HEK293 (cell line): ENCODE measurements at regions of chr2 and their contacts with region 1.

Region 1: GRCh38 chr2:149561309-149561926 is 26.2 kb downstream of the MMADHC start:
- H3K4me3 ChIP-seq: no peak overlapping the region
- H3K27ac ChIP-seq: no peak overlapping the region
- H3K4me1 ChIP-seq: peaks cover 7% of the 10 kb centered on the region; the same call in 1 of the 2 replicates
- CTCF ChIP-seq: peak; percentile 71; the same call in 1 of the 2 replicates

Region 2: DNA sequence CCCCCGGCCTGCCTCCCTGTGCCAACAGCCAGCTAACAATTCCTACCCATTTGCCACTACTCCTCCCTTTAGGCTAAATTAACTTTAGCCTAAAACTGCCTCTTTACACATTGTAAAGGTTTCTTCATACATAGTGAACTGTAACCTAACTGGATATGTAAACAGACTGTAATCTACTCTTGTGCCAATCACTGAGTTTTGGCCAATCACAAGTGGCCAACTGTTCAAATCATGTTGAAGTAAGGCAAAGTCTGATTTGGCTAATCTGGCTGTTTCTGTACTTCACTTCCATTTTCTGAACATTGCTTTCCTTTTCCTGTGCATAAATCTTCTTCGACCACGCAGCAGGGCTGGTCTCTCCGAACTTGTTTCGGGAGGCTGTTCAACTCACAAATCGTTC is 334.6 kb before region 1 on chr2:
- CTCF ChIA-PET with region 1: no interaction called
- POLR2A ChIA-PET with region 1: no interaction called
- H3K4me3 ChIP-seq: no peak overlapping the region
- H3K27ac ChIP-seq: no peak overlapping the region
- H3K4me1 ChIP-seq: peaks cover 10% of the 10 kb centered on the region
- CTCF ChIP-seq: no peak

Region 3: DNA sequence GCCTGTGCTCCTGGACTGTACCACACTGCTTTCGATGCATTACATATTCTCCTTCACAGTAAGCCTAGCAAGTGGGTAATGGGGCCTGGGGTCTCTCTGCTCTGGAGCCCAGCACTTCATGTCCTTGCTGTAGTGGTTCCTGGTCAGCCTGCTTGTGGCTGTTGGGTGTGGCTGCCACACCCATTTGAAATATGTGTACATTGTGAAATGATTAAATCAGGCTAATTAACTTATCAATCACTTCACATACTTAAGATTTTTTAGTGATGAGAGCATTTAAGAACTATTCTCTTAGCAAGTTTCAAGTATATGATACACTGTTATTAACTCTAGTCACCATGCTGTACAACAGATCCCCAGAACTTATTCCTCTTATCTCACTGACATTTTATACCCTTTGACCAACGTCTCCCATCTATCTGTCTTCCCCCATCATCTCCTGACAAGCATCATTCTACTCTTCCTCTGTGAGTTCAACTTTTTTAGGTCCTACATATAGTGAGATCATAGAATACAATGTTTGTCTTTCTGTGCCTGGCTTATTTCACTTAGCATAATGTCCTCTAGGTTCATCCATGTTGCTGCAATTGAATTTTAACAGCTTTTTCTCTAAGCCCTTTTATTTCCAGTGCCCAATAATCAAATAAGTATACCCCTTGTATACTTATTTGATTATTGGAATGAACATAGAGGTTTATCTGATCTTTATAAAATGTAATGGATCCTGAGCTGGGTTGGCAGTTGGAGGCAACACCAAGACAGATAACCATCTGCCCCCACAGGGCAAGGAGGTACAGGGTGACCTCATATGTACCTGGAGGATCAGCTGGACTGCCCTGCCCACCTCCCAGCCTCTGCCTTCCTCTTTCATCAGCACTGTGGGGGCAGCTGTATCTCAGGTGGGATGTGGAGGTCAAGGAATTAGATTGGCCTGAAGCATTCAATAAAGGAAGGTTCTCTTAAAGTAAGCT is 138.8 kb before region 1 on chr2:
- CTCF ChIA-PET with region 1: interaction called, 11 read pairs
- POLR2A ChIA-PET with region 1: no interaction called
- H3K4me3 ChIP-seq: no peak overlapping the region
- H3K27ac ChIP-seq: no peak overlapping the region
- H3K4me1 ChIP-seq: no peaks in the 10 kb centered on the region
- CTCF ChIP-seq: no peak

Region 4: GRCh38 chr2:149451417-149452109 is 109.9 kb before region 1 on chr2:
- CTCF ChIA-PET with region 1: no interaction called
- POLR2A ChIA-PET with region 1: no interaction called
- H3K4me3 ChIP-seq: no peak overlapping the region
- H3K27ac ChIP-seq: no peak overlapping the region
- H3K4me1 ChIP-seq: 0 out of 2 replicates have a peak, but pooled peaks cover 3% of the 10 kb centered on the region
- CTCF ChIP-seq: no peak